GM23248 (cell line): ENCODE measurements at regions of chrX and their contacts with region 1.

Region 1: DNA sequence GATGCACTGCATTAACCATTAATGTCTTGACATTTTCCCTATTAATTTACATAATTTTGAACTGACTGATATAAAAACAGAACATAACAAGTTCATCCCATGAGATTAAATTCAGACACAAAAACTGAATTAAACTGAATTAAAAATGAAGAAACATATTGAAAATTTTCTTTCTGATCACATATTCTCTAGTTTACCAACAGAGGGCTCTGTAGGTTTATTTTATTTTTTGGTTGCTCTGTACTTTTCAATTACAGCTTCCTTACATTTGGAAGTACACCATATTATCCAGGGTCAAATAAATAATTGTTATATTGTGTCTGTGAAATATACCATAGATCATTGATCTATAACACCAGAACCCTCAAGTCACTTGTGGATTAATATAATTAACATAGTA is 27.3 kb upstream of the CT83 start:
- DNase-seq: peak; percentile 19
- H3K4me3 ChIP-seq: no peak overlapping the region
- H3K27ac ChIP-seq: no peak overlapping the region
- H3K4me1 ChIP-seq: no peaks in the 10 kb centered on the region
- H3K27me3 ChIP-seq: no peaks in the 10 kb centered on the region

Region 2: DNA sequence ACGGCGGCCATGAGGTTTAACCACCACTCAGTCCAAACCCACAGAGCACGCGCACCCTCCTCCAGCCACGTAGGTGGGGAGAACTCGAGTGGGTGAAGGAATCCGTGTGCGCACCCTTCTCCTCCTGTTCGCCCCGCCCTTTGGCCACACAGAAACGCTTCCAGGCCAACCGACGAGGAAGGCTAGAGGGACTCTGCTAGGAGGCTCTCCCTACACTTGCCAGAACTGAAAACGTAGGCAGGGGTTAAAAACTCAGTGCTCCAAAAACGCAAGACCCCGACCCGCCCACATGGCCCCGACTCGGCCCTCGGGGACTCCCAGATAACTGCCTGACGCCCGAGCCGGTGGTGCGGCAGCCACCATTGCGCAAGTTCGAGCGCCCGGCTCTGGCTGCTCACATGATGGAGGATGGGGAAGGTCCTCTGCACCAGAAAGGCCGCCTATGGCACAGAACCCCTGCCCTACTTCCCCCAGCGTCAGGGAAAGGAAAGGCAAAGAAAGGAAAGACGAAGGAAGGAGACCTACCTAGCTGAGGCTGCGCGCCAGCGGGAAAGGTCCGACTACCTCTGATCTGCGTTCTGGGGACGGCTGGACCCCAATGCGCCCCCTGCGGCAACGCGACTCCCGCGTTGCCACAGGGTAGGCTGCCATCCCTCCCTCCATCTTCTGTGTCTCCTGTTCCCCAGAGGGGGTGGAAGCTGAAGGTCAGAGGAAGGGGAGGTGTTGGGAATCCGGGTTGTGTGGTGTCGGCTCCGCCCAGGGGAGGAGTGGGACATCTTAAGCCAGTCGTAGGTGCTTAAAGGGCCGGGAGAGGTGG is 521.5 kb before region 1 on chrX:
- in situ Hi-C with region 1: no loop called
- DNase-seq: peak; percentile 64
- H3K4me3 ChIP-seq: peak overlapping the region; percentile 89
- H3K27ac ChIP-seq: peak overlapping the region; percentile 72
- H3K4me1 ChIP-seq: no peaks in the 10 kb centered on the region
- H3K27me3 ChIP-seq: no peaks in the 10 kb centered on the region

Region 3: DNA sequence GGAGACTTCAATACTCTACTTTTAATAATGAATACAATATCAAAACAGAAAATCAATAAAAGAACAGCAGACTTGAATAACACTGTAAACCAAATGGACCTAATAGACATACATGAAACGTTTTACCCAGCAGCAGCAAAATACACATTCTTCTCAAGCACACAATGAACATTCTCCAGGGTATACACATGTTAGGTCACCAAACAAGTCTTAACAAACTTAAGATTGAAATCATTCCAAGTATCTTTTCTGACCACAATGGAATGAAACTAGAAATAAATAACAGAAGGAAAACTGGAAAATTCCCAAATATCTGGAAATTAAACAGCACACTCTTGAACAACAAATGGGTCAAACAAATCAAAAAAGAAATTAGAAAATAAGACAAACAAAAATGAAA is 117.7 kb after region 1 on chrX:
- in situ Hi-C with region 1: no loop called
- DNase-seq: no peak
- H3K4me3 ChIP-seq: no peak overlapping the region
- H3K27ac ChIP-seq: no peak overlapping the region
- H3K4me1 ChIP-seq: no peaks in the 10 kb centered on the region
- H3K27me3 ChIP-seq: no peaks in the 10 kb centered on the region

Region 4: DNA sequence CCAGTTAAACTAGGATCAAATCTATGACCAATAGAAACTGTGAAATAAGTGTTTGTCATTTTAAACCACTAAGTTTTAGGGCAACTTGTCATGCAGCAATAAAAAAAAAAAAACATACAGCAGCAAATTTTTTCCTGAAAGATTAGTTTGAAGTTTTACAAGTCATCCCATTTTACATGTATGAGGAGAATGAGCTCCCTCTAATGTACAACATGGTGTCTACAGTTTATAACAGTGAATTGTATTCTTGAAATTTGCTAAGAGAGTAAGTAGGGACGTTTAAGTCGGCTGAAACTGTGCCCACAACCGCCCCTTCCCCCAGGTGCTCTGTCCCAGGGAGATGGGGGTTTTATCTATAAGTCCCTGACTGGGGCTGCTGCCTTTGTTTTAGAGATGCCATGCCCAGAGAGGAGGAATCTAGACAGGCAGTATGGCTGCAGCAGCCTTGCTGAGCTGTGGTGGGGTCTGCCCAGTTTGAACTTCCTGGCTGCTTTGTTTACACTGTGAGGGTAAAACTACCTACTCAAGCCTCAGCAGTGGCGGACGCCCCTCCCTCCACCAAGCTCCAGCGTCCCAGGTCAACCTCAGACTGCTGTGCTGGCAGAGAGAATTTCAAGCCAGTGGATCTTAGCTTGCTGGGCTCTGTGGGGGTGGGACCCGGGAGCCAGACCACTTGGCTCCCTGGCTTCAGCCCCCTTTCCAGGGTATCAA is 471.9 kb after region 1 on chrX:
- in situ Hi-C with region 1: loop called (anchors 25 kb)
- DNase-seq: peak; percentile 43
- H3K4me3 ChIP-seq: no peak overlapping the region
- H3K27ac ChIP-seq: no peak overlapping the region
- H3K4me1 ChIP-seq: no peaks in the 10 kb centered on the region
- H3K27me3 ChIP-seq: no peaks in the 10 kb centered on the region

Region 5: GRCh38 chrX:117996918-117997480 is 1506.9 kb after region 1 on chrX:
- in situ Hi-C with region 1: loop called (anchors 25 kb)
- DNase-seq: no peak
- H3K4me3 ChIP-seq: no peak overlapping the region
- H3K27ac ChIP-seq: no peak overlapping the region
- H3K4me1 ChIP-seq: no peaks in the 10 kb centered on the region
- H3K27me3 ChIP-seq: no peaks in the 10 kb centered on the region